Right ventricle myocardium superior (tissue), 1 donor: ENCODE measurements at regions of chr2 and their contacts with region 1.

Region 1: DNA sequence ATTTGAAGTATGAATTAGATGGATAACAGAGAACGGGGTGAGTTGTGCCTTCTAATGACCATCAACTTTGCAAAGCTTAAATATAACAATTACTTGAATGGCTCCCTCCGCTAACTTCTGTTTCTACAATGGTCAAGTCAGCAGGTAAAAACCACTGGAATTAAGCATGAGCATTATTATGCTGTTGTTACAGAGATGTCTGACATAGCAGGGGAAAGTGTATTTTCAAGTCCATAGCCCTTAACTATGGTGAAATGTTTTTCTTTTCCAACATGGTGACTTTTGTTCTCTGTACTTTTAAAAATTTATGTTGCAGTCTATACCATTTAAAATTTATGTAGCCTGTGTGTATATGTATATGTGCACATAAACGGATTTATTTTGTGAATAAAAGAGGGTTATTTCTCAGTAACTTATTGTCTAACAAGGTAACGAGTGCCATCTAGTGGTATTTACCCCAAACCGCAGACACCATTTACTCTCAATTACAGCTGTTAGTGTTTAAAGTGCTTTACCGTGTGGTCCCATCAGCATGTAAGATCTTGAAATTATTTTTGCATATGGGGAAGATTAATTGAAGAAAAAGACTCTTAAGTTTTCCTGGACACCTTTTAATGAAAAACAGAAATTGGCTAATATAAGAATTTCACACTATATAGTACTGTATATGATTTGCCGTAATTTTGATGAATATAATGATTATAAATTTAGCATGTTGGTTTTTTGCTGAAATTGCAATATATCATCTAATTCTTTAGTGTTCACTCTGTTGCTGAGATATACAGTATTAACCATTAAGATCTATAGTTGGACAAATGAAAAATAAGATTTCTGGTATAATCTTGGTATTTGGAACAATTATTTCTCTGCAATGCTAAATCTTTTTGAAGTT is 78.2 kb downstream of the UBE2E3 start:
- DNase-seq: no peak
- ATAC-seq: peak; percentile 53

Region 2: DNA sequence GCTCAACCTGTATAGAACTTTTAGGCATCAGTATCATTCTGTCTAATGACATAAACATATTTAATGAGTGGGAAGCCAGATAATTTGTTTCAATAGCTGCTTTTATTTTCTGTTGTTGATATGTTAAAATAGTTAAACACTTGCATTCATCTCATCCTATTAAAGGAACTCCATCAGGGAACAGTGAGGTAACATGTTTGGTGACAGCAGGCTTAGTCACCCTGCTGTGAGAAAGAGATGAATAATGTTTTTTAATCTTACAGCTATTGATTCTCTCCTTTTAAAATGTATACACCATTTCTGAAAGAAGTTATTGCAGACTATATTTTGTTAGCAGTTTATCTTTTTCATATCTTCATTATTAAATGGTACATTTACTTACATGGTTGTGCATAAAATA is 928.2 kb before region 1 on chr2:
- intact Hi-C with region 1: loop called (anchors 10 kb)
- DNase-seq: no peak
- ATAC-seq: no peak